PC-9 (cell line): ENCODE measurements at regions of chr16 and their contacts with region 1.

Region 1: GRCh38 chr16:11066231-11066870 is 122.0 kb downstream of the CLEC16A start:
- DNase-seq: no peak
- H3K4me3 ChIP-seq: no peak overlapping the region
- H3K27ac ChIP-seq: no peak overlapping the region
- H3K4me1 ChIP-seq: no peaks in the 10 kb centered on the region
- H3K27me3 ChIP-seq: no peaks in the 10 kb centered on the region
- CTCF ChIP-seq: no peak

Region 2: DNA sequence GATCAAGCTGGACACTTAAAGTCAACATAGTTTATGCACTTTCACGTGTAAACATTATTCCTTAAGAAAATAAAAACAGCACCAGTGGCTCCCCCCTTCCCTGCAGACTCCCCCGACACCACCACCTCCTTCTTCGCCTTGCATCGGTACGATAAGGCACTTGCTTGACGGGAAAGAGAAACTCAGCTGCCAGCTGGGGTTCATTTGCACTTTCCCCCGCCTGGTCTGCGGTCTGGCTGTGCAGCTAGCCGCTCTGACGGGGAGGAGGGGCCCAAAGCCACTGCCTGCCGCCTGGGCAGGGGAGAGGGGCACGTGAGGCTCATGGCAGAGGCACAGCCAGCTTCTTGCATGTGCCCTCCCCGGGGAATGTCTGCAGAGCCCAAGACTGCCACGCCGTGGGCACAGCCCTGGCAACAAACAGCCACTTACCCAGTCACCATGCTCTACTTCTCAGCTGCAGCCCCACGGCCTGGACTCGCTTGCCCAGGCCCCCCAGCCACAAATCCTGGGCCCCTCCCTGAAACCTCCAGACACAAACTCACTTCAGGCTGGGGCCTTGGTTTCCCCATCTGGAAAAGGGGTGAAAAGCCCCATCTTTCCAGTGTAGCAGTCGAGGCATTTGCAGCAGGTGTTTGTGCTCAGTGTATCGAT is 231.3 kb after region 1 on chr16:
- CTCF ChIA-PET with region 1: no interaction called
- POLR2A ChIA-PET with region 1: interaction called, 14 read pairs
- intact Hi-C with region 1: no loop called
- DNase-seq: peak in 1 of 2 experiments; percentile 77
- H3K4me3 ChIP-seq: no peak overlapping the region
- H3K27ac ChIP-seq: no peak overlapping the region
- H3K4me1 ChIP-seq: peaks cover 6% of the 10 kb centered on the region; the same call in 1 of the 2 replicates
- H3K27me3 ChIP-seq: no peaks in the 10 kb centered on the region
- CTCF ChIP-seq: no peak